Activated T-helper 2 cell treated with anti-CD3 and anti-CD28 coated beads, Interferon-gamma antibody, Interleukin-2, Interleukin-4, amounts not matched to agents 10 μg/mL and 5 μg/mL and 100 μg/mL, durations not matched to agents 14 hours and 24 hours and 36 hours (primary cell): ENCODE measurements at regions of chr22 and their contacts with region 1.

Region 1: GRCh38 chr22:30356449-30357235 is at the starts of genes CCDC157 and SF3A1:
- DNase-seq: peak; percentile 86
- H3K4me3 Mint-ChIP-seq: peak within 1 kb of the TSS; percentile 91
- H3K27ac Mint-ChIP-seq: peak within 1 kb of the TSS; percentile 89
- H3K4me1 Mint-ChIP-seq: peaks cover 34% of the 10 kb centered on the region
- H3K27me3 Mint-ChIP-seq: peaks cover 2% of the 10 kb centered on the region
- total RNA-seq, gene CCDC157: 3.2 and 4.3 TPM in 2 replicates
- total RNA-seq, gene SF3A1: 287 and 325 TPM in 2 replicates

Region 2: DNA sequence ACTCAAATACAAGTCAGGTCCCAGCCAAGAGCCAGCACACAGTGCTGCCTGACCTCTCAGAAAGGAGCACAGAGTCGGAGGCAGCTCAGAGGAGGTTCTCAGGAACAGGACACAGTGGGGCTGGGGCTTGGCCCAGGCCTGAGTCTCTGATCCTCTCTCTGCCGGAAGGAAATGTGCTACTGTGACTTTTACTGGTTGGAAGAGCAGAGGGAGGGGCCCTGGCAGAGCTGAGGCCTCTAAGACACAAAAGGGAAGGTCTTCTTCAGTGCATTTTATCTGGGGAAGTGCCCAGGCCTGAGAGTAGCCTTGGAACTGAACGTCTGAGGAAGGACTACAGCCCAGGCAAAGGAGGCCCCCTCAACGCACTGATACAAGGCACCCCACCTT is 51.1 kb before region 1 on chr22:
- intact Hi-C with region 1: loop called (anchors 5 kb)
- DNase-seq: peak; percentile 65
- H3K4me3 Mint-ChIP-seq: peak overlapping the region; percentile 70
- H3K27ac Mint-ChIP-seq: peak overlapping the region; percentile 87
- H3K4me1 Mint-ChIP-seq: peaks cover 89% of the 10 kb centered on the region
- H3K27me3 Mint-ChIP-seq: no peaks in the 10 kb centered on the region

Region 3: GRCh38 chr22:30396871-30397655 is 40.4 kb after region 1 on chr22 and contains the start of gene SEC14L2:
- intact Hi-C with region 1: no loop called
- DNase-seq: peak; percentile 45
- H3K4me3 Mint-ChIP-seq: peak within 1 kb of the TSS; percentile 90
- H3K27ac Mint-ChIP-seq: peak within 1 kb of the TSS; percentile 51
- H3K4me1 Mint-ChIP-seq: peaks cover 42% of the 10 kb centered on the region
- H3K27me3 Mint-ChIP-seq: no peaks in the 10 kb centered on the region
- total RNA-seq, gene SEC14L2: 32.7 and 36.2 TPM in 2 replicates